Activated CD8-positive, alpha-beta T cell treated with anti-CD3 and anti-CD28 coated beads for 36 hours (primary cell): ENCODE measurements at regions of chr12 and their contacts with region 1.

Region 1: GRCh38 chr12:121499929-121500793 is 80.7 kb downstream of the KDM2B start:
- DNase-seq: peak; percentile 80
- ATAC-seq: peak; percentile 78
- H3K4me3 Mint-ChIP-seq: no peak overlapping the region
- H3K27ac Mint-ChIP-seq: no peak overlapping the region
- H3K4me1 Mint-ChIP-seq: peaks cover 17% of the 10 kb centered on the region
- H3K27me3 Mint-ChIP-seq: no peaks in the 10 kb centered on the region
- CTCF ChIP-seq: peak; percentile 99

Region 2: DNA sequence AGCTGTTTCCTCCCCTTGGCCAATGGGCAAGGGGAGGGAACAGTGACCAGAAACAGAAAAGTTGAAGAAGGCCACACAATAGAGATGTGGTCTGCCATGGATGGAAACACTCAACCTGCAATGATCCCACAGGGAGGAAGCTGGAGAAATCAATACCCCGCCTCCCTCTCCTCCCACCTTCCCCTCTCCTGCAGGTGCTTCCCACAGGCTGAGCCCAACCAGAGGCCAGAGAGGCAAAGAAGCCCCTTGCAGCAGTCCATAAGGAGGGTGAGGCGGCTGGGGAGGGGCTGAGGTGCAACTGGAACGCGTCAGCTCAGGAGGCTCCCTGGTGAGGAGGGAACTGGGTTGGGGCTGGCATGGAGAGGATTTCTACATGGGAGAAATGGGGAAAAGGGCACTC is 16.2 kb before region 1 on chr12:
- CTCF ChIA-PET with region 1: interaction called, 26 read pairs
- POLR2A ChIA-PET with region 1: no interaction called
- intact Hi-C with region 1: no loop called
- DNase-seq: no peak
- ATAC-seq: no peak
- H3K4me3 Mint-ChIP-seq: no peak overlapping the region
- H3K27ac Mint-ChIP-seq: no peak overlapping the region
- H3K4me1 Mint-ChIP-seq: no peaks in the 10 kb centered on the region
- H3K27me3 Mint-ChIP-seq: no peaks in the 10 kb centered on the region
- CTCF ChIP-seq: no peak

Region 3: DNA sequence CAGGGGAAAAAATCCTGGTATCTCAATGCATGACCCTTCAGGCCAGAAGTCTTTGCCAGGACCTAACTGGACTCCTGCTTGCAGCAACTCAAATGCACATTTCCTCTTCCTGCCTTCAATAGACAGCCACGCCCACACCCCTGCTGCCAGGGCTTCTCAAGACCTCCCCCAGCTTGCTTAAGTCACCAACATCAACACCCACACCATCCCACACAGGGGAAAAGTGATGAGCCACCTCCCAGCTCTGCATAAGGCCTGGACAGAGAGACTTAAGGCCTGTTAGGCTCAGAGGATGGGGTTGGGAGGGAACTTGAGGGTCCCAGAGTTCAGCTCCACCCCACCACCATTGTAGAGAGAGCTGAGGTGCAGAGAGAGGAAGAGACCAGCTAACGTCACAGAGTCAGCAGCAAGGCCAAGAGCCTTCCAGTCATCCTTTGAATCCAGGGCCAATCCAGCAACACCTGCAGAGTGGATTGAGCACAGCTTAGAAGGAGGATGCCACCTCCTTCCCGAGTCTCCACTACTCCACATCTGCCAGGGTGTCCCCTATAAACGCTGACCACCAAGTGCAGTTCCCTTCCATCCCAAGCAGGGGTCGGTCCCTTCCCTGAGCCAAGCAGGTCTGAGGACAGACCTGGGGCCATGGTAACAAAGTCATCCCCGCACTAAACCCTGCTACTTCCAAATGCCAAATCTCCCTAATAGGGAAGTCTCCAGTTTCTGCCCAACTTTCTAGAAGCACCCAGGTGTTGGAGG is 30.6 kb after region 1 on chr12:
- CTCF ChIA-PET with region 1: interaction called, 4 read pairs
- POLR2A ChIA-PET with region 1: no interaction called
- intact Hi-C with region 1: loop called (anchors 5 kb)
- DNase-seq: peak; percentile 92
- ATAC-seq: peak; percentile 78
- H3K4me3 Mint-ChIP-seq: peak overlapping the region; percentile 18
- H3K27ac Mint-ChIP-seq: peak overlapping the region; percentile 86
- H3K4me1 Mint-ChIP-seq: peaks cover 54% of the 10 kb centered on the region
- H3K27me3 Mint-ChIP-seq: no peaks in the 10 kb centered on the region
- CTCF ChIP-seq: no peak

Region 4: GRCh38 chr12:121550974-121551634 is 50.9 kb after region 1 on chr12:
- CTCF ChIA-PET with region 1: interaction called, 11 read pairs
- POLR2A ChIA-PET with region 1: no interaction called
- intact Hi-C with region 1: no loop called
- DNase-seq: no peak
- ATAC-seq: no peak
- H3K4me3 Mint-ChIP-seq: no peak overlapping the region
- H3K27ac Mint-ChIP-seq: no peak overlapping the region
- H3K4me1 Mint-ChIP-seq: peaks cover 17% of the 10 kb centered on the region
- H3K27me3 Mint-ChIP-seq: no peaks in the 10 kb centered on the region
- CTCF ChIP-seq: no peak

Region 5: DNA sequence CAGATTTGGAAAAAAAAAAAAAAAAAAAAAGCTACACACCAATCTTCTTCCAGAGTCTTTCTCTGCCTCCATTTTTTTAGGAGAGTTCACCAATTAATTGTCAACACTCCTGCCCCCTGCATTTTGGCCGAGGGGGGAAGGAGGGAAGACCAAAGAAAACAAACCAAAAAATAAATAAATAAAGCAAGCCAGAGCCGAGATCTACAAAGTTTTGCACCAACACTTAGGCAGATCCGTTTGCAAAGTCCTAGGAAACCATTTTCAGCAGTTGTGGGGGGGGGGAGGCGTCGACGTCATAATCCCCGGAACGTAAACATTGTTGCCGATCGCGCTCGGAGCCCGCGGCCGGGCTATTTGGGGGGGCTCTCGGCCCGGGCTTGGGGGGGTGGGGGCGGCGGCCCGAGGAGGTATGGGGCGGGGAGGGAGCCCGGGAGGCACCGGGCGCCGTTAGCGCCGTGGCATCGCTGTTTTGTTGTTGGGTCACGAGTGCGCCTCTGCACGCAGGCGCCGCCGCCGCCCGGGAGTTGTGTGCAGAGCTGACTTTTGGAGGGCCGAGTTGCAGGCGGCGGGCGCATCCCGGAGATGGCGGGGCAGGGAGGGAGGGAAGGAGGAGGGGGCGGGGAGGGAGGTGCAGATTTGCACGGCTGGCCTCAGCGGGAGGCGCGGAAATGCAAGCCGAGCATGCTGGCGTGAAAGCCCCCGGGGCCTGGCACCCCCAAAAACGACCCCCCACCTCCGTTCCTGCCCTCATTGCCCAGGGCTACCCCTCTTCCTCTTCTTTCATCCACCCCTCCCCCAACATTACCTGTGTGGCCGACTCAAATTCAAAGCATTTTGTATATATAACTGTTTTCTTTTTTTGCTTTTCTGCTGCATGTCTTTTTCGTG is 80.1 kb after region 1 on chr12:
- CTCF ChIA-PET with region 1: interaction called, 8 read pairs
- POLR2A ChIA-PET with region 1: no interaction called
- intact Hi-C with region 1: loop called (anchors 10 kb)
- DNase-seq: peak; percentile 90
- ATAC-seq: peak; percentile 70
- H3K4me3 Mint-ChIP-seq: peak overlapping the region; percentile 97
- H3K27ac Mint-ChIP-seq: peak overlapping the region; percentile 99
- H3K4me1 Mint-ChIP-seq: peaks cover 30% of the 10 kb centered on the region
- H3K27me3 Mint-ChIP-seq: no peaks in the 10 kb centered on the region
- CTCF ChIP-seq: no peak

Region 6: GRCh38 chr12:121649819-121650353 is 149.7 kb after region 1 on chr12:
- CTCF ChIA-PET with region 1: no interaction called
- POLR2A ChIA-PET with region 1: no interaction called
- intact Hi-C with region 1: no loop called
- DNase-seq: peak; percentile 44
- ATAC-seq: peak; percentile 77
- H3K4me3 Mint-ChIP-seq: no peak overlapping the region
- H3K27ac Mint-ChIP-seq: peak overlapping the region; percentile 47
- H3K4me1 Mint-ChIP-seq: peaks cover 26% of the 10 kb centered on the region
- H3K27me3 Mint-ChIP-seq: no peaks in the 10 kb centered on the region
- CTCF ChIP-seq: no peak

Region 7: GRCh38 chr12:121688966-121689365 is 188.8 kb after region 1 on chr12:
- CTCF ChIA-PET with region 1: interaction called, 15 read pairs
- POLR2A ChIA-PET with region 1: no interaction called
- intact Hi-C with region 1: loop called (anchors 10 kb)
- DNase-seq: no peak
- ATAC-seq: no peak
- H3K4me3 Mint-ChIP-seq: no peak overlapping the region
- H3K27ac Mint-ChIP-seq: no peak overlapping the region
- H3K4me1 Mint-ChIP-seq: peaks cover 5% of the 10 kb centered on the region
- H3K27me3 Mint-ChIP-seq: no peaks in the 10 kb centered on the region
- CTCF ChIP-seq: no peak

Region 8: GRCh38 chr12:122642009-122642408 is 1141.8 kb after region 1 on chr12:
- CTCF ChIA-PET with region 1: no interaction called
- POLR2A ChIA-PET with region 1: no interaction called
- intact Hi-C with region 1: no loop called
- DNase-seq: no peak
- ATAC-seq: no peak
- H3K4me3 Mint-ChIP-seq: no peak overlapping the region
- H3K27ac Mint-ChIP-seq: no peak overlapping the region
- H3K4me1 Mint-ChIP-seq: peaks cover 10% of the 10 kb centered on the region
- H3K27me3 Mint-ChIP-seq: no peaks in the 10 kb centered on the region
- CTCF ChIP-seq: no peak